ENCODE measurements at regions of chr1 and their contacts with region 1.

Region 1: DNA sequence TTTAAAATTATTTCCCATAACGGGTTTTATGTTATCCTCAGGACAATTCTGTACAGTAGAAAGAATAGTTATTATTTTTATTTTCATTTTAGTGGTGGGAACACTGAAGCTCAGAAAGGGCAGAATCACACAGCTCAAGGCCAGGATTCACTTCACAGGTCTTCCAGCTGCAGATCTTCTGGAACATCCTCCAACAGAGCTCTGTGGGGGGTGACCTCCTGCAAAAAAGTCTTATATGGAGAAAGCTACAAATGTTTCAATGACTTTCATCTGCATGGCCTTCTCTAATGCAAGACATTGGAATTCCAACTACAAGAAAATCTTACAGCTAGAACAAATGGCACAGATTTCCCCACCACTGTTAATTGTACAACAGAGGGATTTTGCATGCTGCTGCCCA is 64.2 kb downstream of the SEC16B start:
- DNase-seq: no peak
- ATAC-seq: no peak
- H3K4me3 ChIP-seq: no peak overlapping the region
- H3K27ac ChIP-seq: no peak overlapping the region
- H3K4me1 ChIP-seq: no peaks in the 10 kb centered on the region
- H3K27me3 ChIP-seq: peaks cover 19% of the 10 kb centered on the region
- CTCF ChIP-seq: no peak
- POLR2A ChIP-seq: no peak
- RAD21 ChIP-seq: no peak

Region 2: DNA sequence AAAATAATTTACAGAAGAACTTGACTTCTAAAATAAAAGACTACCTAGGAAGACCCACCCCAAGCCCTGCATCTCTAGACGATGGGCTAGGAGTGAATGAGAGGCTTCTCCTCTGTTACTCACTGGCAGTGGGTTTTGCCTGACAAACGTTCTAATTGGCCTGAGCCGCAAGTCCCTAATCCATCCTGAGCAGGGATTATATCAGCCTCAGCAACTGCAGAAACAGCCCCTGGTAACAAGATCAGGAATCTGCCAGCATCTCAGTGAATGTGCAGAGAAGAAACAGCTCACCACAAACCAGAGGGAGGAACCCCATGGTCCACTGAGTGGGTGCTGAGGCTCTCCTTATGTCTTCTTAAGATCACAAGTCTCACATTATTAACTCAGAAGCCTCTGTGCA is 494.3 kb before region 1 on chr1:
- CTCF ChIA-PET with region 1: no interaction called
- POLR2A ChIA-PET with region 1: interaction called, 12 read pairs
- dilution Hi-C with region 1: no loop called
- in situ Hi-C with region 1: no loop called
- intact Hi-C with region 1: no loop called
- DNase-seq: no peak
- ATAC-seq: no peak
- H3K4me3 ChIP-seq: no peak overlapping the region
- H3K27ac ChIP-seq: no peak overlapping the region
- H3K4me1 ChIP-seq: no peaks in the 10 kb centered on the region
- H3K27me3 ChIP-seq: no peaks in the 10 kb centered on the region
- CTCF ChIP-seq: no peak
- POLR2A ChIP-seq: no peak
- RAD21 ChIP-seq: no peak